B cell (primary cell): ENCODE measurements at regions of chr17 and their contacts with region 1.

Region 1: GRCh38 chr17:80426681-80427326 is 11.8 kb downstream of the ENDOV start:
- DNase-seq: peak; percentile 90
- ATAC-seq: peak; percentile 96
- H3K4me3 ChIP-seq: no peak overlapping the region
- H3K4me3 Mint-ChIP-seq: no peak overlapping the region
- H3K27ac ChIP-seq: no peak overlapping the region
- H3K27ac Mint-ChIP-seq: no peak overlapping the region
- H3K4me1 ChIP-seq: peaks cover 37 to 39% of the 10 kb centered on the region in 2 donors
- H3K4me1 Mint-ChIP-seq: peaks cover 27% of the 10 kb centered on the region
- H3K27me3 ChIP-seq: peaks cover 0 to 3% (median 0%) of the 10 kb centered on the region in 4 experiments
- H3K27me3 Mint-ChIP-seq: no peaks in the 10 kb centered on the region
- CTCF ChIP-seq: peak; percentile 95

Region 2: GRCh38 chr17:80414803-80415625 is 11.8 kb before region 1 on chr17 and contains the start of gene ENDOV:
- CTCF ChIA-PET with region 1: interaction called, 4 read pairs
- POLR2A ChIA-PET with region 1: interaction called, 10 read pairs
- intact Hi-C with region 1: no loop called
- DNase-seq: peak; percentile 98
- ATAC-seq: peak; percentile 93
- H3K4me3 ChIP-seq: peak within 1 kb of the TSS; percentile 36 to 97 (median 82)
- H3K4me3 Mint-ChIP-seq: peak within 1 kb of the TSS; percentile 89
- H3K27ac ChIP-seq: peak within 1 kb of the TSS; percentile 60 to 81
- H3K27ac Mint-ChIP-seq: peak within 1 kb of the TSS; percentile 91
- H3K4me1 ChIP-seq: peaks cover 14 to 20% of the 10 kb centered on the region in 2 donors
- H3K4me1 Mint-ChIP-seq: peaks cover 24% of the 10 kb centered on the region
- H3K27me3 ChIP-seq: peaks cover 0 to 9% (median 2%) of the 10 kb centered on the region in 4 experiments
- H3K27me3 Mint-ChIP-seq: peaks cover 21% of the 10 kb centered on the region
- CTCF ChIP-seq: no peak
- total RNA-seq, gene ENDOV: 49.1 and 49.5 TPM in 2 replicates

Region 3: GRCh38 chr17:80446645-80447405 is 20.0 kb after region 1 on chr17:
- CTCF ChIA-PET with region 1: no interaction called
- POLR2A ChIA-PET with region 1: no interaction called
- intact Hi-C with region 1: no loop called
- DNase-seq: no peak
- ATAC-seq: no peak
- H3K4me3 ChIP-seq: no peak overlapping the region
- H3K4me3 Mint-ChIP-seq: no peak overlapping the region
- H3K27ac ChIP-seq: no peak overlapping the region
- H3K27ac Mint-ChIP-seq: no peak overlapping the region
- H3K4me1 ChIP-seq: no peaks in the 10 kb centered on the region
- H3K4me1 Mint-ChIP-seq: no peaks in the 10 kb centered on the region
- H3K27me3 ChIP-seq: no peaks in the 10 kb centered on the region
- H3K27me3 Mint-ChIP-seq: peaks cover 14% of the 10 kb centered on the region
- CTCF ChIP-seq: no peak

Region 4: DNA sequence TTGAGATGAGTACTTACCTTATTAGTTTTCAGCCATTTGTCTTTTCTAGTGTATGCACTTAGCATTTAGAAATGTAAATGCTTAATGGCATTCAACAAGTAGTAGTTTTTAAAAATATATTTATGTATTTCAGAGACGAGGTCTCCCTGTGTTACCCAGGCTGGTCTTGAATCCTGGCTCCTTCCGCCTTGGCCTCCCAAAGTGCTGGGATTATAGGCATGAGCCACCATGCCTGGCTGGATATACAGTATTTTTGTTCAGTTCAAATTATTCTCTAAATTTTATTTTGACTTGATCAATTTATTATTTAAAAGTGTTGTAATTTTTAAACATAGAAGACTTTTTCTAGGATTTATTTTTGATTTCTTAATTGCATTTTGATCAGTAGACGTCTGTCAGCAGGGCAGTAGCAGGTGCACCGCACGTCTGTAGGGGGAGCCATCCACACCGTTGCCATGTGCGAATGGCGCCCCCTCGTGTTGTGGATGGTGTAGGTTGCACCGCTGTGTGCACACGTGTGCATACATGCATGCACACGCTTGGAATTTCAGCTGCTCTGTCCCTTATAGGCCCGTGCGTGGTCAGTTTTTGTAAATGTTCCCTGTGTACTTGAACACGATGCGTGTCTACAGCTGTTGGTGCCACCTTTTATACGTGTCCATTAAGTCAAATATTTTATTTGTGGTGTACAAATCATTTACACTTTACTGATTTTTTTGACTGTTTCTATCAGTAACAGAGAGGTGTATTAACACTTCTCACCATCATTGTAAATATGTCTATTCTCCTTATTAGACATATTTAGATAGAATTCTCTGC is 148.5 kb after region 1 on chr17:
- CTCF ChIA-PET with region 1: interaction called, 75 read pairs
- POLR2A ChIA-PET with region 1: no interaction called
- intact Hi-C with region 1: no loop called
- DNase-seq: peak; percentile 90
- ATAC-seq: peak; percentile 100
- H3K4me3 ChIP-seq: no peak overlapping the region
- H3K4me3 Mint-ChIP-seq: no peak overlapping the region
- H3K27ac ChIP-seq: no peak overlapping the region
- H3K27ac Mint-ChIP-seq: no peak overlapping the region
- H3K4me1 ChIP-seq: no peaks in the 10 kb centered on the region
- H3K4me1 Mint-ChIP-seq: peaks cover 10% of the 10 kb centered on the region
- H3K27me3 ChIP-seq: no peaks in the 10 kb centered on the region
- H3K27me3 Mint-ChIP-seq: no peaks in the 10 kb centered on the region
- CTCF ChIP-seq: peak; percentile 100

Region 5: DNA sequence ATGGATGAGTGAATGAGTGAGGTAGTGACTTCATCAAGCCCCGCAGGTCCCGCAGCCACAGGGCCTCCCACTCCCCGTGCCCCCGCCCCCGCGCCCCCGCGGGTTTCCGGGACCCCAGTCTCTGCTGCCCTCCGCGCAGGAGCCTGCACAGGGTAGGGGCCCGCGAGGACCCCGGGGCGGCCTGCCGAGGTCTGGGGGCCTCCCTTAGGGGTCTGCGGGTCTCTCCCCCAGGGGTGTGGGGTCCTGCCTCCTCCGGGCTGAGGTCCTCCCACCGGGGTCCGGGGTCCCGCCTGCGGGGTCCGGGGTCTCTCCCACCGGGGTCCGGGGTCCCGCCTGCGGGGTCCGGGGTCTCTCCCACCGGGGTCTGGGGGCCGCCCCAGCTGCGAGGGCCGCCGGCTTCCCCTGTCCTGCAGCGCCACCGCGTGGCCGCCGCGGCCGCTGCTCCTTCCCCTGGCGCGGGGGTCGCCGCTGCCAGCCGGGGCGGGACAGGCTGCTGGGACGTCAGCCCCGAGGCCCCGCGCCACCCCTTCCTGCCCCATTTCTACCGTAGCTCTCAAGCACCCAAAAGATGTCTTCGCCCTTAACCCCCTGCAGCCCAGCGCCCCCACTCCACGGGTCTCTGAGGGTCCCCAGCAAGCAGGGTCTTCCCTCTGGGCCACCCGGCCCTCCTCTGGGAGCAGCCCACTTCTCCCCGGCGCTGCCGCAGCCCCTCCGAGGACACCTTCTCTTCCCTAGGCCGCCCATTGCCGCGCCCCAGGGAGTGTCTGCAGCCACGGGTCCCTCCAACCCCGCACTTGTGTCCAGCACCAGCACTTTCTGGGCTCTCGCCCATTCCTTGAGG is 554.5 kb after region 1 on chr17:
- CTCF ChIA-PET with region 1: interaction called, 19 read pairs
- POLR2A ChIA-PET with region 1: no interaction called
- intact Hi-C with region 1: loop called (anchors 1 kb)
- DNase-seq: peak; percentile 67
- ATAC-seq: peak; percentile 72
- H3K4me3 ChIP-seq: peak overlapping the region in 2 of 5 experiments; percentile 2 to 23
- H3K4me3 Mint-ChIP-seq: peak overlapping the region; percentile 69
- H3K27ac ChIP-seq: no peak overlapping the region
- H3K27ac Mint-ChIP-seq: no peak overlapping the region
- H3K4me1 ChIP-seq: peaks cover 12 to 17% of the 10 kb centered on the region in 2 donors
- H3K4me1 Mint-ChIP-seq: peaks cover 12% of the 10 kb centered on the region
- H3K27me3 ChIP-seq: no peaks in the 10 kb centered on the region
- H3K27me3 Mint-ChIP-seq: peaks cover 9% of the 10 kb centered on the region
- CTCF ChIP-seq: peak; percentile 94